Activated CD4-positive, alpha-beta memory T cell treated with anti-CD3 and anti-CD28 coated beads, Interleukin-2, amount 10 ng/mL, durations not matched to agents 7 days and 5 days (primary cell): ENCODE measurements at regions of chr14 and their contacts with region 1.

Region 1: DNA sequence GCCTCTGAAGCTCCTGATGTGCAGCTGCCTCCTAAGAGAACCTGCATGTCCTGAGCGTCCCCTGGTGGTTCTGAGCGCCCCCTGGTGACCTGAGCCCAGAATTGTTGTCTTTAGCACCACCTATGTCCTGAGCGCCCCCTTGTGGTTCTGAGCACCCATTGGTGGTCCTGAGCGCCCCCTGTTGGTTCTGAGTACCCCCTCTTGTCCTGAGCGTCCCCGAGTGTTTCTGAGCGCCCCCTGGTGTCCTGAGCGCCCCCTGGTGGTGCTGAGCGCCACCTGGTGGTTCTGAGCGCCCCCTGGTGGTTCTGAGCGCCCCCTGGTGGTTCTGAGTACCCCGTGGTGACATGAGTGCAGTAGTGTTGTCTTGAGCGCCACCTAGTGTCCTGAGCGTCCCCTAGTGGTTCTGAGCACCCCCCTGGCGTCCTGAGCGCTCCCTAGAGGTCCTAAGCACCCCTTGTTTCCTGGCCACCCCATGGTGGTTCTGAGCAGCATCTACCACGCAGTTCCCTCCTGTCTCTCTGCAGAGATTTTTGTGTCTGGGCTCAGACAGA is 782.5 kb downstream of the TMEM121 start:
- DNase-seq: peak; percentile 92
- H3K4me3 Mint-ChIP-seq: no peak overlapping the region
- H3K27ac Mint-ChIP-seq: peak overlapping the region; percentile 42
- H3K4me1 Mint-ChIP-seq: no peaks in the 10 kb centered on the region
- H3K27me3 Mint-ChIP-seq: peaks cover 41% of the 10 kb centered on the region

Region 2: GRCh38 chr14:106277503-106277902 is 31.4 kb before region 1 on chr14:
- CTCF ChIA-PET with region 1: interaction called, 17 read pairs
- POLR2A ChIA-PET with region 1: no interaction called
- DNase-seq: no peak
- H3K4me3 Mint-ChIP-seq: no peak overlapping the region
- H3K27ac Mint-ChIP-seq: no peak overlapping the region
- H3K4me1 Mint-ChIP-seq: peaks cover 13% of the 10 kb centered on the region
- H3K27me3 Mint-ChIP-seq: peaks cover 44% of the 10 kb centered on the region

Region 3: GRCh38 chr14:106286697-106287290 is 22.1 kb before region 1 on chr14:
- CTCF ChIA-PET with region 1: interaction called, 22 read pairs
- POLR2A ChIA-PET with region 1: no interaction called
- DNase-seq: peak; percentile 29
- H3K4me3 Mint-ChIP-seq: no peak overlapping the region
- H3K27ac Mint-ChIP-seq: no peak overlapping the region
- H3K4me1 Mint-ChIP-seq: no peaks in the 10 kb centered on the region
- H3K27me3 Mint-ChIP-seq: peaks cover 23% of the 10 kb centered on the region

Region 4: DNA sequence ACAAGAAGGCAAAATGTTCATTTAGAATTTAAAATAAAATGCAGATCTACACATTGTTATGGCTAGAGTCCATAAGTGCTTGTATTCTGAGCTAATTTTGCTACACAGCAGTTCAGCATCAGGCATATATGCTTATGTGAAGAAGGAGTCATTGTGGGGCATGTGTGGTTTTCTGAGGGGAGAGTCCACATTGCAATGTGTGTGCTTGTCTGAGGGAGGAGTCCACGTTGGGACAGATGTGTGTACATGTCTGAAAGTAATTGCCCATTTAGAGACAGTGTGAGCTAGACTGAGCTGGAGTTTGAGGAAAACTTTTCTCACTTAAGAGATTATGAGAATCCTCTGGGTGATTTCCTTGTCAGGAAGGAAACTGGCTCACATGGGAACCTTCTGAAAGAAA is 14.6 kb before region 1 on chr14:
- CTCF ChIA-PET with region 1: interaction called, 22 read pairs
- POLR2A ChIA-PET with region 1: no interaction called
- DNase-seq: no peak
- H3K4me3 Mint-ChIP-seq: no peak overlapping the region
- H3K27ac Mint-ChIP-seq: no peak overlapping the region
- H3K4me1 Mint-ChIP-seq: no peaks in the 10 kb centered on the region
- H3K27me3 Mint-ChIP-seq: peaks cover 58% of the 10 kb centered on the region

Region 5: DNA sequence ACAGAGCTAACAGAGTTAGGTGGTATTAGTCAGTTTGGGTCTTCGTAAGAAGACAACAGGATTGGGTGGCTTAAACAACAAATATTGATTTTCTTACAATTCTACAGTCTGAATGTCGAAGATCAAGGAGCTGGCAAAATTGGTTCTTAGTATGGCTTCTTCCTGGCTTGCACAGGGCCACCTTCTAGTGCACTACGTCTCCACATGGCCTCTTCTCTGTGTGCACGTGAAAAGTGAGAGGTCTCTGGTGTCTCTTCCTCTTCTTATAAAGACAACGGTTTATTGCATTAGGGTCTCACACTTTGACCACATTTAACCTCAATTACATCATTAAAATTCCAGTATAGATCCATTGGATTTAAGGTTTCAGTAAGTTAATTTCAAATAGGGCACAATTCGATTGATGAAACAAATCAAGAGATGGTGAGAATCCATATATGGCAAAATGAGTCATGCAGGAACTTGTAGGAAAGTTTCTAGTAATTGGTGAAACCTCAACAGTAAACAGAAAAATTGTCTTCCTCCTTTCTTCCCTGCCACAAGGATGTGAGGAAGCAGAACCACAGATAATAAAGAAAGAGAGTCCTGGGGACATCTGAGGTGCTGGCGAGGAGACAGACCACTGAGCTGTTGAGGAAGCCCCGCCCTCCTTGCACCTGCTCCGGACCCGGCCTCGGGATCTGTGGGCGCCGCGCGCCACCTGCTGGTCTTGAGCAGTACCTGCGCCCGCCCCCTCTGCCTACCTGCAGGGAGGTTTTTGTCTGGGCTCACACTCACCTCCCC is 64.1 kb after region 1 on chr14:
- CTCF ChIA-PET with region 1: interaction called, 20 read pairs
- POLR2A ChIA-PET with region 1: no interaction called
- DNase-seq: peak; percentile 80
- H3K4me3 Mint-ChIP-seq: peak overlapping the region; percentile 33
- H3K27ac Mint-ChIP-seq: no peak overlapping the region
- H3K4me1 Mint-ChIP-seq: peaks cover 26% of the 10 kb centered on the region
- H3K27me3 Mint-ChIP-seq: peaks cover 22% of the 10 kb centered on the region